ENCODE measurements at regions of chr3 and their contacts with region 1.

Region 1: DNA sequence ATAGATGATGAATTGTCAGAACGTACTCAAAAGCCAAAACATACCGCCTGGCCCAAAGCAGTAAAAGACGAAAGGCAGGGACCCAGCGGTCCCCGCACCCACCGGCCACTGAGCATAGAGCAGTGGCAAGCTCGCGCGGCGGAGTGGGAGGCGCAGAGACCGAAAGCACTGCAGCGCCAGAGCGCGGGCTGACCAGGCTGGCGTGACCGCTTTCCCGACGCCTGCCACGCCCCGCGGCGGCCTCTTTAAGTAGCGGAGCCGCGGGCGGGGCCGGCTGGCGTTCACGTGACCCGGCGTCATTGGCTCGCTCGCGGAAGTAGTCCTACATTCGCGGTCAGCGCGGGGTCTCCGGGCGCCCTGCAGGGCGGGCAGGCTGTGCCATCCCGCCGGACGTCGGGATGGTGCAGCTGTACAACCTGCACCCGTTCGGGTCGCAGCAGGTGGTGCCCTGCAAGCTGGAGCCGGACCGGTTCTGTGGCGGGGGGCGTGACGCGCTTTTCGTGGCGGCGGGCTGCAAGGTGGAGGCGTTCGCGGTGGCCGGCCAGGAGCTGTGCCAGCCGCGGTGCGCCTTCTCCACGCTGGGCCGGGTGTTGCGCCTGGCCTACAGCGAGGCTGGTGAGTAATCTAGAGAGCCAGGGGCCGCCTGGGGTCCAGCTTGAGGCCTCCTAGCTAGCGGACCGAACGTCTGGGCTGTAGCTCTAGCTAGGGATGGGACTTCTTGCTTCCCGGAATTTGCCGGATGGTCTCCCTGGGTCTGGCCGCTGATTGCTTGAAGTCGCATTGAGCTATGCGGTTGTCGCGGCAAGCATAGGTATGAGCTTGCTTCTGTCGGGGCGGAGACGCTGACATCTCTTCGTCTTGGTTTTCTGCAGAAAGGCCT is at the start of gene HPS3:
- DNase-seq: peak; percentile 58 to 92 (median 74)
- ATAC-seq: peak; percentile 80
- H3K4me3 ChIP-seq: peak within 1 kb of the TSS; percentile 91
- H3K4me3 Mint-ChIP-seq: peak within 1 kb of the TSS; percentile 91
- H3K27ac ChIP-seq: peak within 1 kb of the TSS; percentile 38 to 62
- H3K27ac Mint-ChIP-seq: peak within 1 kb of the TSS; percentile 86
- H3K4me1 ChIP-seq: peaks cover 21% of the 10 kb centered on the region
- H3K4me1 Mint-ChIP-seq: peaks cover 49% of the 10 kb centered on the region
- H3K27me3 ChIP-seq: no peaks in the 10 kb centered on the region
- H3K27me3 Mint-ChIP-seq: peaks cover 3% of the 10 kb centered on the region
- CTCF ChIP-seq: no peak
- total RNA-seq, gene HPS3: 5.5 TPM

Region 2: GRCh38 chr3:148991194-148992026 is 138.2 kb before region 1 on chr3 and contains the start of gene GYG1:
- CTCF ChIA-PET with region 1: interaction called, 3 read pairs
- POLR2A ChIA-PET with region 1: interaction called, 12 read pairs
- intact Hi-C with region 1: loop called (anchors 5 to 10 kb)
- DNase-seq: peak; percentile 61 to 95 (median 76)
- ATAC-seq: peak; percentile 88
- H3K4me3 ChIP-seq: peak within 1 kb of the TSS; percentile 60
- H3K4me3 Mint-ChIP-seq: peak within 1 kb of the TSS; percentile 87
- H3K27ac ChIP-seq: peak within 1 kb of the TSS; percentile 55 to 56
- H3K27ac Mint-ChIP-seq: peak within 1 kb of the TSS; percentile 76
- H3K4me1 ChIP-seq: peaks cover 22% of the 10 kb centered on the region
- H3K4me1 Mint-ChIP-seq: peaks cover 27% of the 10 kb centered on the region
- H3K27me3 ChIP-seq: no peaks in the 10 kb centered on the region
- H3K27me3 Mint-ChIP-seq: no peaks in the 10 kb centered on the region
- CTCF ChIP-seq: peak; percentile 40
- total RNA-seq, gene GYG1: 21.0 to 22.3 TPM

Region 3: GRCh38 chr3:149016669-149017541 is 112.7 kb before region 1 on chr3:
- CTCF ChIA-PET with region 1: no interaction called
- POLR2A ChIA-PET with region 1: no interaction called
- intact Hi-C with region 1: no loop called
- DNase-seq: no peak
- ATAC-seq: no peak
- H3K4me3 ChIP-seq: no peak overlapping the region
- H3K4me3 Mint-ChIP-seq: no peak overlapping the region
- H3K27ac ChIP-seq: no peak overlapping the region
- H3K27ac Mint-ChIP-seq: no peak overlapping the region
- H3K4me1 ChIP-seq: no peaks in the 10 kb centered on the region
- H3K4me1 Mint-ChIP-seq: no peaks in the 10 kb centered on the region
- H3K27me3 ChIP-seq: no peaks in the 10 kb centered on the region
- H3K27me3 Mint-ChIP-seq: no peaks in the 10 kb centered on the region
- CTCF ChIP-seq: no peak

Region 4: GRCh38 chr3:149086232-149086988 is 43.2 kb before region 1 on chr3 and contains the start of gene HLTF:
- CTCF ChIA-PET with region 1: no interaction called
- POLR2A ChIA-PET with region 1: interaction called, 4 read pairs
- intact Hi-C with region 1: loop called in 1 of 2 experiments (anchors 2 kb)
- DNase-seq: peak; percentile 77 to 95 (median 88)
- ATAC-seq: peak; percentile 97
- H3K4me3 ChIP-seq: peak within 1 kb of the TSS; percentile 82
- H3K4me3 Mint-ChIP-seq: peak within 1 kb of the TSS; percentile 97
- H3K27ac ChIP-seq: peak within 1 kb of the TSS in 1 of 2 donors; percentile 46
- H3K27ac Mint-ChIP-seq: peak within 1 kb of the TSS; percentile 84
- H3K4me1 ChIP-seq: peaks cover 15% of the 10 kb centered on the region
- H3K4me1 Mint-ChIP-seq: peaks cover 30% of the 10 kb centered on the region
- H3K27me3 ChIP-seq: no peaks in the 10 kb centered on the region
- H3K27me3 Mint-ChIP-seq: no peaks in the 10 kb centered on the region
- CTCF ChIP-seq: no peak
- total RNA-seq, gene HLTF: 3.3 to 3.6 TPM

Region 5: DNA sequence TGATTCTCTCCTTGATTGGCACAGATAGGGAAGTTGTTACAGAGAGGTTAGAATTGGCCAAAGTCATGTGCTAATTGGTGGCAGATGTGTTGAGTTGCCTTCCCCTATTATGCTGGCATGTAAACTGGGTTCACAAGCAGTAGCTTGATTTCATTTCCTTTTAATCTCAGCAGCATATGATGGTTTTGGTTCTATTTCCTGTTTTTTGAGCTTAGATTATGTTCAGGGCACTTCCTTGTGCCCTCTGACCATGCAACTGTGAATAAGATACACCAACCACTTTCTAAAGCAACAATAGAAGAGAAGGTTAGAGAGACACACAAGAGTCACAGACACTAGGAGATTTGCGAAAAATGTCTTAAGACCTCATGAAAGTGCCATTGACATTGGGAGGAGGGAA is 16.4 kb after region 1 on chr3:
- CTCF ChIA-PET with region 1: interaction called, 3 read pairs
- POLR2A ChIA-PET with region 1: interaction called, 18 read pairs
- intact Hi-C with region 1: no loop called
- DNase-seq: peak in 3 of 14 experiments; percentile 44 to 66 (median 47)
- ATAC-seq: peak; percentile 48
- H3K4me3 ChIP-seq: no peak overlapping the region
- H3K4me3 Mint-ChIP-seq: no peak overlapping the region
- H3K27ac ChIP-seq: peak overlapping the region in 1 of 2 donors; percentile 64
- H3K27ac Mint-ChIP-seq: no peak overlapping the region
- H3K4me1 ChIP-seq: peaks cover 8% of the 10 kb centered on the region
- H3K4me1 Mint-ChIP-seq: peaks cover 10% of the 10 kb centered on the region
- H3K27me3 ChIP-seq: no peaks in the 10 kb centered on the region
- H3K27me3 Mint-ChIP-seq: no peaks in the 10 kb centered on the region
- CTCF ChIP-seq: no peak

Region 6: DNA sequence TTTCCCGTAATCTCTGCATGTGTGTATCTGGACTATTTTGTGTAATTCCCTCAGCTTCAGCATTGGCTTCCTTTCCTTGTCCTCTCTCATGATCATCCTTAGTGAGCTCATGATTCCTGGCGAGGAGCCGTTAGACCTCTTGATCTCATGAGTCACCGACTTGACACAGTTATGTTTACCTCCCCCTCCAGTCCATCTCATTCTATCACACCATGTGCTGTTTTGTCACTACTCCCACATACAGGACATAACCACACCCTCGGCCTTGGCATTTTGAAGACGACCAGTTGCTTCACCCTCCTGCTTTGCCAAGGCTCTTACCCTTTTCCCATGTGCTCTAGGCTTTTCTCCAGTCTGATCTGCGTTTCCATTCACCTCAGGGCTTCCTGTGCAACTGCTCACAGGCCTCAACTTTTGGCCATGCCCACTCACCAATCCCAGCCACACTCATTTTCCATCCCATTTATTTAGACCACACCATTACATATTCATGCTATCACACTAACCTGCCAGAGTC is 50.5 kb after region 1 on chr3:
- CTCF ChIA-PET with region 1: no interaction called
- POLR2A ChIA-PET with region 1: no interaction called
- intact Hi-C with region 1: no loop called
- DNase-seq: peak in 1 of 14 experiments; percentile 6
- ATAC-seq: no peak
- H3K4me3 ChIP-seq: no peak overlapping the region
- H3K4me3 Mint-ChIP-seq: no peak overlapping the region
- H3K27ac ChIP-seq: no peak overlapping the region
- H3K27ac Mint-ChIP-seq: no peak overlapping the region
- H3K4me1 ChIP-seq: no peaks in the 10 kb centered on the region
- H3K4me1 Mint-ChIP-seq: no peaks in the 10 kb centered on the region
- H3K27me3 ChIP-seq: no peaks in the 10 kb centered on the region
- H3K27me3 Mint-ChIP-seq: no peaks in the 10 kb centered on the region
- CTCF ChIP-seq: no peak

Region 7: GRCh38 chr3:149752051-149752787 is 622.7 kb after region 1 on chr3 and contains the start of gene COMMD2:
- CTCF ChIA-PET with region 1: no interaction called
- POLR2A ChIA-PET with region 1: interaction called, 4 read pairs
- intact Hi-C with region 1: loop called in 1 of 2 experiments (anchors 10 kb)
- DNase-seq: peak; percentile 53 to 89 (median 66)
- ATAC-seq: peak; percentile 86
- H3K4me3 ChIP-seq: peak within 1 kb of the TSS; percentile 85
- H3K4me3 Mint-ChIP-seq: peak within 1 kb of the TSS; percentile 99
- H3K27ac ChIP-seq: peak within 1 kb of the TSS; percentile 69
- H3K27ac Mint-ChIP-seq: peak within 1 kb of the TSS; percentile 96
- H3K4me1 ChIP-seq: peaks cover 12% of the 10 kb centered on the region
- H3K4me1 Mint-ChIP-seq: peaks cover 45% of the 10 kb centered on the region
- H3K27me3 ChIP-seq: no peaks in the 10 kb centered on the region
- H3K27me3 Mint-ChIP-seq: no peaks in the 10 kb centered on the region
- CTCF ChIP-seq: peak; percentile 68
- total RNA-seq, gene COMMD2: 42.0 to 46.8 TPM

Measured in CD4-positive, alpha-beta T cell (primary cell).